Activated CD4-positive, alpha-beta memory T cell treated with anti-CD3 and anti-CD28 coated beads for 36 hours (primary cell): ENCODE measurements at regions of chr2 and their contacts with region 1.

Region 1: DNA sequence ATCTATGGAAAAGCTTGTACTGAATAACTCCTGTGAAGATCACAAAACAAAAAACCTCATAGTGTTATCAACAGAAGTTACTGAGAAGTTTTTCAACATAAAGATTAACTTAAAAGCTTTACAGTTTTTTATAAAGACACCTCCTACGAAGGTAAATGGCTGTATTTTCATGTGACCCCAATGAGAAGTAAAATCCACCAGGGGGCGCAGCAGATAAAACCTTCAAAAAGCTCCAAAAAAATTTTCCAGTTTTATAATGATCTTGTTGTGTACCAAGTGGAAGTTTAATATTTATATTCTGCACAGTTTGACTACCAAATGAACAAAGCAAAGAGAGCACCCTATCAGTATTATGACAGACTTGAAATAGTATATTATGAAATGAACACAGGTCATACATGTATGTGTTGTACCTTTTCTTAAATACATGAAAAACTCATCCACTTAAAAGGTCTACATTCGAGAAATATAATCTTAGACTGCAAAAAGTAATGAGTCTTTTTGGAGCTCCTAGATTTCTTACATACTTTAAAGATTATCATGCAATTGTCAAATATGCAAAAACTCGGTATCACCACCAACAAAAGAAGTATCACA is 38.5 kb downstream of the PNO1 start:
- DNase-seq: peak; percentile 44
- H3K4me3 Mint-ChIP-seq: no peak overlapping the region
- H3K27ac Mint-ChIP-seq: no peak overlapping the region
- H3K4me1 Mint-ChIP-seq: peaks cover 53% of the 10 kb centered on the region
- H3K27me3 Mint-ChIP-seq: no peaks in the 10 kb centered on the region

Region 2: GRCh38 chr2:68185541-68186164 is 10.6 kb before region 1 on chr2:
- CTCF ChIA-PET with region 1: interaction called, 18 read pairs
- POLR2A ChIA-PET with region 1: no interaction called
- intact Hi-C with region 1: no loop called
- DNase-seq: peak; percentile 71
- H3K4me3 Mint-ChIP-seq: no peak overlapping the region
- H3K27ac Mint-ChIP-seq: no peak overlapping the region
- H3K4me1 Mint-ChIP-seq: peaks cover 21% of the 10 kb centered on the region
- H3K27me3 Mint-ChIP-seq: no peaks in the 10 kb centered on the region

Region 3: DNA sequence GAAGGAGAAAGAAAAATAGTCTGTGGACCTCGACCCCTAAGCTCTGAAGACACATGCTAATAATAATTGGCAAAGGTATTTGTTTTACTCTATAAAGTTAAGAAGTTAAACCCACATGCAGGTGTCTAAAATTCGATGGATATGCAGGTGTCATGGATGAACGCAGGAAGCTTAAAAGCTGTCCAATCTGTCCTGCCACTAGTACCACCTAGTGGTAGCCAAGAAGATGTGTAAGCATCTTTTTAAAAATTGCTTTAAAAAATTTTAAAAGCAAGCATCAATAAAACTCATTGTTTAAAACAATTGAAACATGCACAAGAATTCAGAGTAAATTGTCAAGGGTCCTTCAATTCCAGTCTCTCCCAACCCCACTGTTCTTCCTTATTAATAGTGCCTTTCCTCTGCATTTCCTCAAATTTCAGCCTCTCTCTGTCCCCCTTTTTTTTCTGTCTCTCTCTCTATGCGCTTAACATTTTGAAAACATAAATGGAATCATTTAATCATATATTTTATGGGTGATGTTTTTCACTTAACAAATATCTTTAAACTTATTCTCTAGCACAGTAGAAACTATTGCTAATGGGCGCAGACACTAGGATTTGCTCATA is 86.7 kb after region 1 on chr2:
- CTCF ChIA-PET with region 1: interaction called, 29 read pairs
- POLR2A ChIA-PET with region 1: no interaction called
- intact Hi-C with region 1: no loop called
- DNase-seq: no peak
- H3K4me3 Mint-ChIP-seq: no peak overlapping the region
- H3K27ac Mint-ChIP-seq: no peak overlapping the region
- H3K4me1 Mint-ChIP-seq: no peaks in the 10 kb centered on the region
- H3K27me3 Mint-ChIP-seq: peaks cover 7% of the 10 kb centered on the region